ENCODE measurements at regions of chr5 and their contacts with region 1.

Region 1: GRCh38 chr5:82225525-82226172 is 52.5 kb downstream of the RPS23 start:
- DNase-seq: peak; percentile 14 to 48
- ATAC-seq: peak; percentile 57 to 84 (median 74)
- H3K4me3 ChIP-seq: no peak overlapping the region
- H3K27ac ChIP-seq: no peak overlapping the region
- H3K4me1 ChIP-seq: no peaks in the 10 kb centered on the region
- H3K27me3 ChIP-seq: no peaks in the 10 kb centered on the region
- CTCF ChIP-seq: peak; percentile 65 to 88 (median 87)

Region 2: GRCh38 chr5:81425569-81425968 is 800.1 kb before region 1 on chr5:
- intact Hi-C with region 1: loop called in 8 of 10 experiments (anchors 1 to 10 kb)
- DNase-seq: no peak
- ATAC-seq: peak in 7 of 8 donors; percentile 33 to 81 (median 65)
- H3K4me3 ChIP-seq: no peak overlapping the region
- H3K27ac ChIP-seq: peak overlapping the region in 4 of 10 donors; percentile 14 to 57 (median 30)
- H3K4me1 ChIP-seq: peaks cover 0 to 34% (median 20%) of the 10 kb centered on the region in 9 donors
- H3K27me3 ChIP-seq: no peaks in the 10 kb centered on the region
- CTCF ChIP-seq: peak; percentile 63 to 80 (median 71)

Region 3: GRCh38 chr5:81506900-81507588 is 718.6 kb before region 1 on chr5:
- intact Hi-C with region 1: loop called in 1 of 10 experiments (anchors 10 kb)
- DNase-seq: peak in 1 of 2 donors; percentile 80
- ATAC-seq: peak; percentile 97 to 100 (median 98)
- H3K4me3 ChIP-seq: peak overlapping the region in 1 of 10 donors; percentile 9
- H3K27ac ChIP-seq: peak overlapping the region in 6 of 10 donors; percentile 45 to 74 (median 61)
- H3K4me1 ChIP-seq: peaks cover 0 to 27% (median 20%) of the 10 kb centered on the region in 9 donors
- H3K27me3 ChIP-seq: no peaks in the 10 kb centered on the region
- CTCF ChIP-seq: peak; percentile 82 to 97 (median 85)

Region 4: DNA sequence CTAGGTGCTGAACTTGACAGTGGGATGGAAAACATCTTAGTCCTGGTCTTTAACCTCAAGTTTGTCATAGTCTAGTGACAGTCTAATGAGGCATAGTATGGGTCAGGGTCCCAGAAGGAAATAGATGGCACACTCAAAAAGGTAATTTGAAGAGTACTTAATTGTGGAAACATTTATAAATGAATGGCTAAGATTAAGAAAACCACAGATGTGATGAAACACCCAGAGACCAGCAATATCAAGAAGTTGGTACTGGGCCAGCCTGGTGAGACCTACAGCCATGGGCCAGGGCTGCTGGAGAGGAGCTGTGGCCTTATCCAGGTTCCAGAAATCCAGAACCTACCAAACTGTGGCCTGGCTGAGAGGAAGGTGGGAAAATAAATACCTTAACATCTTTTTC is 347.3 kb before region 1 on chr5:
- intact Hi-C with region 1: loop called in 1 of 10 experiments (anchors 10 kb)
- DNase-seq: no peak
- ATAC-seq: no peak
- H3K4me3 ChIP-seq: no peak overlapping the region
- H3K27ac ChIP-seq: no peak overlapping the region
- H3K4me1 ChIP-seq: no peaks in the 10 kb centered on the region
- H3K27me3 ChIP-seq: no peaks in the 10 kb centered on the region
- CTCF ChIP-seq: no peak

Measured in heart right ventricle (tissue), 16 donors.